Activated naive CD8-positive, alpha-beta T cell treated with anti-CD3 and anti-CD28 coated beads, Interleukin-2, amount 10 ng/mL, durations not matched to agents 7 days and 5 days (primary cell): ENCODE measurements at regions of chr2 and their contacts with region 1.

Region 1: DNA sequence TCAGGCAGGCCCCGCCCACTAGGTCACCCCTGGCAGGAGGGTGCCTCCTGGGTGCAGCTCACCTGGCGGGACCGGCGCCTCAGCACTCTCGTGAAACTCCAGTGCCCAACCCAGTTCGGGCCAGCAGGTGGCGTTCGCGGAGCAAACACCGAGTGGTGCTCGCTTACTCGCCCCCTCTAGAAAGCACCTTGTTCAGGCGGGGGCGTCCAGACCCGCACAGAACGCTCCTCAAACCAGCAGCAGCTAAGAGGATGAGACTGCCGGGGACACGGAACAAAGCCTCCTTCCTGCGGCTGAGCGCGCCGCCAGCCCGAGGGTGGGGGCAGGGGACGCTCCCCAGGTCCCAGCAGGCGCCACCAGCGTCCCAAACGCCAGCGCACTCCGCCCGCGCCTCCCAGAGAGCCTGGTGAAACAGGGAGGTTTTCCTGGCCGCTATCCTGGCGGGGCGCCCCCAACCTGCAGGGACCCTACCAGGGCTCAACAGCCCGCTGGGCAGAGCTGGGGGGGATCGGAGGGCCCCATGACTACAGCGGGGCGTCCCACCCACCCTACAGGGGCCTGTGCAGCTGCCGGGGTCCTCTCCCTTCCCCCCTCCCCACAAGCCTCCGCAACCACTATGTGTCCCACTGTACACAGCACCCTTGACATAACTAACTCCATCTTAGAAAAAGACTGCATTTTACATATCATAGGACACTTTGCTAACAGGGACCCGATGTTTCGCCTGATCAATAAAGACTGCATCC is 44.7 kb downstream of the MRPS5 start:
- DNase-seq: peak; percentile 94
- ATAC-seq: peak; percentile 71
- H3K4me3 Mint-ChIP-seq: peak overlapping the region; percentile 86
- H3K27ac Mint-ChIP-seq: peak overlapping the region; percentile 95
- H3K4me1 Mint-ChIP-seq: peaks cover 64% of the 10 kb centered on the region
- H3K27me3 Mint-ChIP-seq: peaks cover 3% of the 10 kb centered on the region

Region 2: GRCh38 chr2:94964193-94964592 is 112.8 kb before region 1 on chr2:
- POLR2A ChIA-PET with region 1: no interaction called
- DNase-seq: no peak
- ATAC-seq: no peak
- H3K4me3 Mint-ChIP-seq: no peak overlapping the region
- H3K27ac Mint-ChIP-seq: no peak overlapping the region
- H3K4me1 Mint-ChIP-seq: no peaks in the 10 kb centered on the region
- H3K27me3 Mint-ChIP-seq: peaks cover 36% of the 10 kb centered on the region

Region 3: DNA sequence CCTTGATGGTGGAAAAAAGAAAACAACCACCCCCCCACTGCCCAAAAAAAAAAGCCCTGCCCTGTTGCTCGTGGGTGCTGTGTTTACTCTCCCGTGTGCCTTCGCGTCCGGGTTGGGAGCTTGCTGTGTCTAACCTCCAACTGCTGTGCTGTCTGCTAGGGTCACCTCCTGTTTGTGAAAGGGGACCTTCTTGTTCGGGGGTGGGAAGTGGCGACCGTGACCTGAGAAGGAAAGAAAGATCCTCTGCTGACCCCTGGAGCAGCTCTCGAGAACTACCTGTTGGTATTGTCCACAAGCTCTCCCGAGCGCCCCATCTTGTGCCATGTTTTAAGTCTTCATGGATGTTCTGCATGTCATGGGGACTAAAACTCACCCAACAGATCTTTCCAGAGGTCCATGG is 23.4 kb before region 1 on chr2:
- POLR2A ChIA-PET with region 1: interaction called, 124 read pairs
- DNase-seq: peak; percentile 28
- ATAC-seq: no peak
- H3K4me3 Mint-ChIP-seq: no peak overlapping the region
- H3K27ac Mint-ChIP-seq: peak overlapping the region; percentile 72
- H3K4me1 Mint-ChIP-seq: peaks cover 52% of the 10 kb centered on the region
- H3K27me3 Mint-ChIP-seq: no peaks in the 10 kb centered on the region

Region 4: DNA sequence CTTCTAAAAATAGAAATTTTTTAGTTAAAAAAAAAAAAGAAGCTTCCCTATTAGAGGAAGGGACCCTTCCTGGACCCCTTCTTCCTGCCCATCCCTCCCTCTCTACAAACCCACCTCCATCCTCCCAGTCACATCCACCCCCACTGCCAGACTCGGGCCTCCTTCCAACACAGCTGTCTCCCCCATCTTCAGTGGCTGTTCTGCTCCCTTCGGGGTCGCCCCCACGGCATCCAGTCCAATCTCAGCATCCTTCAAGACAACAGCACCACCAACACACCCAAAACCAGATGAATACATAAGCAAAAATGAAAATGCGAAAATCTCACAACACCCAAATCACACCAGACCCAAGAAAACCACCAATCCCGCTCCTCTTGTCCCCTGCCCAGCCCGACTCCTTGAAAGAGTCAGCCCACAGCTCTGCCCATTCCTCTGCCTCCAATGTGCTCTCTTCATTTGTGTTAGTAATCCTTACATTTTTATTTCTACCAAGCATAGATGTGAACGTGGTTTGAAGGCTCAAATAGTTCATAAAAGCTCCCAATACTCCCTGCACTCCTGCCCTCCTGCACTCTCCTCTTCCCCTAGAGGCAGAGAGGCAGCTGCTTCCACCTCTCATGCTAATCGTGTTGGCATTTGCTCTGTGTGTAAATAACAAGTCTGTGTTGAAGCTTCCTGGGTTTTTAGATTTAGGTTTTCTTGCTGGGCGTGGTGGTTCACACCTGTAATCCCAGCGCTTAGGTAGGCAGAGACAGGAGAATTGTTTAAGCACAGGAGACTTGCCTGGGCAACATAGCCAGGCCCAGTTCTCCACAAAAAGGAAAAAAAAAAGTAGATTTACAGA is 14.5 kb before region 1 on chr2:
- POLR2A ChIA-PET with region 1: interaction called, 124 read pairs
- DNase-seq: no peak
- ATAC-seq: peak; percentile 2
- H3K4me3 Mint-ChIP-seq: peak overlapping the region; percentile 45
- H3K27ac Mint-ChIP-seq: peak overlapping the region; percentile 86
- H3K4me1 Mint-ChIP-seq: peaks cover 30% of the 10 kb centered on the region
- H3K27me3 Mint-ChIP-seq: no peaks in the 10 kb centered on the region

Region 5: DNA sequence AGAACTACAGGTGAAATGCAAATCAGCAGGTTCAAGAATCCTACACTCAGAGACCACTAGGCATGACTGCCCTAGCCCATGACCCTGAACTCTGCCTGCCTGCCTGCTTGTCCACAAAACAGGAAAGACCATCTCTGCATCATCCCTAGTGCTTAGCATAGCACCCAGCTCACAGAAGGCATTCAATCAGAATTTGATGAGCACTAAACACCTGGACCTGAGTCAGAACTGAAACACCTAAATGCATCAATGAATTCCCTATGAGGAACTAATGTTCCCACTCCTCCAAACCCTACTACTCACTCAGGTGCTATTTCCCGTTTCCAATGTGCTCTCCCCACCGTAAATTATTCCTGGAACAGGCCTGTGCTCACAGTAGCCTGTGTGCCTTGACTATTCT is 23.0 kb after region 1 on chr2:
- POLR2A ChIA-PET with region 1: no interaction called
- DNase-seq: no peak
- ATAC-seq: no peak
- H3K4me3 Mint-ChIP-seq: no peak overlapping the region
- H3K27ac Mint-ChIP-seq: no peak overlapping the region
- H3K4me1 Mint-ChIP-seq: peaks cover 10% of the 10 kb centered on the region
- H3K27me3 Mint-ChIP-seq: no peaks in the 10 kb centered on the region

Region 6: DNA sequence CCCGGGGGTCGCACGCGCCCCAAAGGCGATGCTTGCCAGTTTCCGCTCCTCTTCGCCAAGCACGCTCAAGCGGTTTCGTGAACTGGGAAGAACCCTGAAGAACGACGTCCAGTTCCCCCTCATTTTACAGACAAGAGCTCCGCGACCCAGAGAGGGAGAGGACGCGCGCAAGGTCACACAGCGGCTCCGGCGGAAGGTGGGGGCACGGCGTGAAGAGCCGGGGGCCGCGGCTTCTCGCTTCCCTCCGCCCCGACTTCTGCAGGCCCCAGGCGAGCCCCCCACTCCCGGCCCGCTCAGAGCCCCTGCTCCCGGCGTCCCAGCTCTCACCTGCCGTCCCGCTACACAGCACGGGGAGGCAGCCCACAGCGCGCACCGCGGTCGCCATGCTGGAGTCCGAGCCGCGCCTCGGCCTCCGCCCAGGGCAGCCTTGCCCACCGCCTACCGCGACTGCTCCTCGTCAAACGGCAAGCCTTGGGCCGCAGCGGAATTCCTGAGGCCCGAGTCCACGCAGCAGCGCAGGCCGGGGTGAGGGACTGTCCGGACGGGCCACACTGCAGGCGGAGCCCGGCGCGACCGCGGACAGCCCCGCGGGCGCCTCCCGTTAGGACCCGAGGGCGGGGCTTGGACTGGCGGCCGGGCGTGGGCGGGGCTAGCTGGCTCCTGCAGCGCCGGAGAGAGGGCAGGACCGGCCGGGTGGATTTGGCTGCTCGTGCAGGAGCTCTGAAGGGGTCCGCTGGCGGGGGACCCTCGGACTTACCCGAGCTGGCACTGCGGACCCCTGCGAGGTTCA is 44.6 kb after region 1 on chr2 and contains the start of gene MRPS5:
- POLR2A ChIA-PET with region 1: interaction called, 14 read pairs
- DNase-seq: peak; percentile 94
- ATAC-seq: peak; percentile 88
- H3K4me3 Mint-ChIP-seq: peak within 1 kb of the TSS; percentile 94
- H3K27ac Mint-ChIP-seq: peak within 1 kb of the TSS; percentile 93
- H3K4me1 Mint-ChIP-seq: peaks cover 41% of the 10 kb centered on the region
- H3K27me3 Mint-ChIP-seq: no peaks in the 10 kb centered on the region
- total RNA-seq, gene MRPS5: 75.2 to 79.3 TPM